Transverse colon (tissue), 4 donors: ENCODE measurements at regions of chr16 and their contacts with region 1.

Region 1: GRCh38 chr16:51024703-51025102 is 126.4 kb downstream of the SALL1 start:
- DNase-seq: no peak
- H3K4me3 ChIP-seq: no peak overlapping the region
- H3K27ac ChIP-seq: no peak overlapping the region
- H3K4me1 ChIP-seq: no peaks in the 10 kb centered on the region
- H3K27me3 ChIP-seq: no peaks in the 10 kb centered on the region
- CTCF ChIP-seq: no peak
- EP300 ChIP-seq: no peak
- POLR2A ChIP-seq: no peak

Region 2: GRCh38 chr16:50696575-50697420 is 327.9 kb before region 1 on chr16:
- in situ Hi-C with region 1: no loop called
- intact Hi-C with region 1: no loop called
- DNase-seq: peak; percentile 91
- H3K4me3 ChIP-seq: no peak overlapping the region
- H3K27ac ChIP-seq: peak overlapping the region; percentile 40 to 64 (median 55)
- H3K4me1 ChIP-seq: peaks cover 11 to 29% (median 21%) of the 10 kb centered on the region in 4 donors
- H3K27me3 ChIP-seq: no peaks in the 10 kb centered on the region
- CTCF ChIP-seq: no peak
- EP300 ChIP-seq: peak; percentile 11
- POLR2A ChIP-seq: no peak

Region 3: GRCh38 chr16:50994995-50995394 is 29.7 kb before region 1 on chr16:
- in situ Hi-C with region 1: no loop called
- intact Hi-C with region 1: loop called (anchors 1 kb)
- DNase-seq: no peak
- H3K4me3 ChIP-seq: no peak overlapping the region
- H3K27ac ChIP-seq: no peak overlapping the region
- H3K4me1 ChIP-seq: no peaks in the 10 kb centered on the region
- H3K27me3 ChIP-seq: no peaks in the 10 kb centered on the region
- CTCF ChIP-seq: no peak
- EP300 ChIP-seq: no peak
- POLR2A ChIP-seq: no peak

Region 4: GRCh38 chr16:51290442-51291285 is 266.0 kb after region 1 on chr16:
- in situ Hi-C with region 1: no loop called
- intact Hi-C with region 1: no loop called
- DNase-seq: no peak
- H3K4me3 ChIP-seq: no peak overlapping the region
- H3K27ac ChIP-seq: no peak overlapping the region
- H3K4me1 ChIP-seq: no peaks in the 10 kb centered on the region
- H3K27me3 ChIP-seq: no peaks in the 10 kb centered on the region
- CTCF ChIP-seq: no peak
- EP300 ChIP-seq: no peak
- POLR2A ChIP-seq: no peak